OCI-LY7 (cell line): ENCODE measurements at regions of chr9 and their contacts with region 1.

Region 1: DNA sequence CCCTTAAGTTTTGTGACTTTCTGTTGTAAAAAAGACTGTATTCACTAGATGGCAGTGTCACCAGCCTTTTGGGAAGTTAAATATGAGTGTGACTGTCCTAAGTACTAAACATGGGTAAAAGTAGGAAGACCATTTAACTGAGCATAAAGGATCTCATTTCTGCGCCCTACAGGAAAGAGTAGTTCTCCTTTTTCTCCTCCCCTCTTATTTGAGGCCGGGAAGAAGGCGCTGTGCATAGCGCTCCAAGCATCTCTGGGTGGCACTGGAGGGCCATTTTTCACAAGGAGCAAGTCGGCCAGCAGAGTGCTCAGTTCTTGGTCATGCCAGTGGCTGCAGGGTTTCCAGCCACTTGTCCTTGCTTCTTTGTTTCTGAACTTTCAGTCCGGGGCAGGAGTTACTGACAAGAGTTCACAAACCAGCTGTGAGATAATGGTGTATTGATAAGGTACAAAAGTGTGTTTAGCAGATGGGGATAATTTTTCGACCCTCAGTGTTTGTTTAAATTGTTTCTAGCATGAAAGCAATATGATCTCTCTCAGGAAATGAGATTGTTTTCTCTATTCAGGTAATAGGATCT is 227.6 kb upstream of the DMRT1 start:
- DNase-seq: peak; percentile 77
- H3K4me3 ChIP-seq: no peak overlapping the region
- H3K27ac ChIP-seq: peak overlapping the region; percentile 2
- H3K4me1 ChIP-seq: peaks cover 30% of the 10 kb centered on the region
- CTCF ChIP-seq: peak; percentile 99

Region 2: GRCh38 chr9:385818-386398 is 228.0 kb before region 1 on chr9:
- CTCF ChIA-PET with region 1: no interaction called
- POLR2A ChIA-PET with region 1: no interaction called
- intact Hi-C with region 1: loop called (anchors 1 kb)
- DNase-seq: peak; percentile 67
- H3K4me3 ChIP-seq: no peak overlapping the region
- H3K27ac ChIP-seq: no peak overlapping the region
- H3K4me1 ChIP-seq: no peaks in the 10 kb centered on the region
- CTCF ChIP-seq: peak; percentile 89

Region 3: GRCh38 chr9:563200-563599 is 50.7 kb before region 1 on chr9:
- CTCF ChIA-PET with region 1: no interaction called
- POLR2A ChIA-PET with region 1: no interaction called
- intact Hi-C with region 1: no loop called
- DNase-seq: no peak
- H3K4me3 ChIP-seq: no peak overlapping the region
- H3K27ac ChIP-seq: no peak overlapping the region
- H3K4me1 ChIP-seq: peaks cover 82% of the 10 kb centered on the region
- CTCF ChIP-seq: no peak

Region 4: GRCh38 chr9:684941-685340 is 71.1 kb after region 1 on chr9:
- CTCF ChIA-PET with region 1: no interaction called
- POLR2A ChIA-PET with region 1: no interaction called
- intact Hi-C with region 1: loop called (anchors 5 kb)
- DNase-seq: no peak
- H3K4me3 ChIP-seq: no peak overlapping the region
- H3K27ac ChIP-seq: no peak overlapping the region
- H3K4me1 ChIP-seq: peaks cover 12% of the 10 kb centered on the region
- CTCF ChIP-seq: no peak

Region 5: DNA sequence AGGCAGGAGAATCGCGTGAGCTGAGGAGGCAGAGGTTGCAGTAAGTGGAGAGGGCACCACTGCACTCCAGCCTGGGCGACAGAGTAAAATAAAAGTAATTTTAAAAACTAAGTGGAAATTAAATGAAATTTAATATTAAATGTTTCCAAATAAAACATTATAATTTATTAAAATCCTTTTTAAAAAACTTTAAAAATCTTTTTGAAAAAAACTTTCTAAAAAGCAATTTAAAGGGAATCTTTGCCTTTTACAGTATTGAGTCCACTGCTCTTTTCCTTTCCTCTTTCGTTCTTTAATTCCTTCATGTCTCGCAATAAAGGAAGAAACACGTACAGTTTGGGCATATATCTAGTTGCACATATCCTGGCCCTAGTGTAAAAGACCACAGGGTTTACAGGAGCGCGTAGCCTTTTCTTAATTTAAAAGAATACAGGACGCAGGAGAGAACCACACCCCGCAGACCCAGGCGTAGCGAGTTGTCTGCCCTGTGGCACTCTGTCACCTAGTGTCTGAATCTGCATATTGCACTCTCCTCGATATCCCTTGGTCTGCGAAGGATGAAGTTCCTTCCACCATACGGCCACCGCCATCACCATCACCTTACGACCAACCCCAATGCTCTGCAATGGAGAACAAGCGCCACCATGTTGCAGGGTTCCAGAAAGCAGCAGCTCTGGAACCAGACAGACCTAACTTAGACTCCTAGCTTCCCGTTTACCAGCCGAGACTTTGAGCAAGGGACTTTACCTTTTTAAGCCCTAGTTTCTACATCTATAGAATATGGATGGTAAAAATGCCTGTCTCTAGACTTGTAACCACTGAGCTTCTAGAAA is 150.0 kb after region 1 on chr9:
- CTCF ChIA-PET with region 1: interaction called, 5 read pairs
- POLR2A ChIA-PET with region 1: interaction called, 5 read pairs
- intact Hi-C with region 1: loop called (anchors 1 kb)
- DNase-seq: peak; percentile 93
- H3K4me3 ChIP-seq: no peak overlapping the region
- H3K27ac ChIP-seq: no peak overlapping the region
- H3K4me1 ChIP-seq: peaks cover 8% of the 10 kb centered on the region
- CTCF ChIP-seq: peak; percentile 99

Region 6: GRCh38 chr9:806285-807156 is 192.7 kb after region 1 on chr9:
- CTCF ChIA-PET with region 1: no interaction called
- POLR2A ChIA-PET with region 1: no interaction called
- intact Hi-C with region 1: loop called (anchors 2 kb)
- DNase-seq: peak; percentile 54
- H3K4me3 ChIP-seq: no peak overlapping the region
- H3K27ac ChIP-seq: no peak overlapping the region
- H3K4me1 ChIP-seq: no peaks in the 10 kb centered on the region
- CTCF ChIP-seq: peak; percentile 92

Region 7: GRCh38 chr9:893843-894420 is 280.1 kb after region 1 on chr9:
- CTCF ChIA-PET with region 1: no interaction called
- POLR2A ChIA-PET with region 1: no interaction called
- intact Hi-C with region 1: loop called (anchors 10 kb)
- DNase-seq: peak; percentile 81
- H3K4me3 ChIP-seq: peak overlapping the region; percentile 32
- H3K27ac ChIP-seq: no peak overlapping the region
- H3K4me1 ChIP-seq: peaks cover 10% of the 10 kb centered on the region
- CTCF ChIP-seq: peak; percentile 97

Region 8: DNA sequence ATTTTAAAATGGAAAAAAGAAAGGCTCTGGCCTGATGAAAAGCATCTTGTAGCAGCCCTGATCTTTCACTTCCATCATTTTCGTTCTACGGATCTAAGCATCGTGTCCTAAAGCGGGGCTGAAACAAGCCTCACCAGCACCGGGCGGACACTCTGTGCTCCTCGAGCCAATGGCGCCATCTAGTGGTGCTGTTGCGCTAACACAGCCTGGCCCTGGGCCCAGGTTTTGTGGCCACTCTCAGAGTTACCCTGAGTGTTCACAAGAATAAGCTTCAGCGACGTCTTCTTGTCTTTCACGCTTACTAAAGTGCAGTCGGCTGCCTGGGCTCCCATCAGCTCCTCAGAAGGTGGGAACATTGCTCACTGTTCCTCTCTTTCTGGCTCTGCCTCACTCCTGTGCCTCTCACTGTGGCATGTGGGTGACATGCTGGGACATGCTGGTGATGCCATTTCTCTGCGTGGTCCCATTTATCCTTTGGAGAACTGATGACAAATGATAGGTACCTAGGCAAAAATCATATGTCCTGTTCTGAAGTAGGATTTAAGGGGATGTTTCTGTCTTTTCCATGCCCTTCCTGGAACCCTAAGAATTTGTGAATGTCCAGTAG is 395.3 kb after region 1 on chr9:
- CTCF ChIA-PET with region 1: no interaction called
- POLR2A ChIA-PET with region 1: no interaction called
- intact Hi-C with region 1: loop called (anchors 2 kb)
- DNase-seq: peak; percentile 81
- H3K4me3 ChIP-seq: no peak overlapping the region
- H3K27ac ChIP-seq: no peak overlapping the region
- H3K4me1 ChIP-seq: peaks cover 14% of the 10 kb centered on the region
- CTCF ChIP-seq: peak; percentile 98